ENCODE measurements at regions of chr1 and their contacts with region 1.

Region 1: GRCh38 chr1:207205614-207206061 is 101.6 kb downstream of the C4BPA start:
- DNase-seq: no peak
- H3K4me3 Mint-ChIP-seq: no peak overlapping the region
- H3K27ac Mint-ChIP-seq: peak overlapping the region; percentile 78
- H3K4me1 Mint-ChIP-seq: peaks cover 11% of the 10 kb centered on the region
- H3K27me3 Mint-ChIP-seq: no peaks in the 10 kb centered on the region
- CTCF ChIP-seq: no peak

Region 2: DNA sequence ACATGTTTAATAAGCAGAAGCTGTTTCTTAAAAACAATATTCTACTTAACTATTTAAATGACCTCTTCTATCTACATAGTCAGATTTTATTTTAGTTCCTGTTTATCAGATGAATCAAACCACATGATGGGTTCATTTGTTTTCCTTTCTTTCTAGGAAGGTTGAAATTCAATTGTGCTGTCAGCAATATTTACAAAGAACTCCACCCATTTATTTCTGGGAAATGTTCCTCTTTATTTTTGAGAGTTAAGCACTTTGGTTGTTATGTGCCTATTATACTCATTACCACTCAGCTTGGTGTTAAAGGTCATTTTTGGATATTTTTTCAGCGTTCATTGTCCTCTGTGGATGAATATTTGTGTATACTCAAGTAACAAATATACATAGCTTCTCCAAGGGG is 16.7 kb before region 1 on chr1:
- CTCF ChIA-PET with region 1: interaction called, 3 read pairs
- POLR2A ChIA-PET with region 1: interaction called, 12 read pairs
- intact Hi-C with region 1: no loop called
- DNase-seq: no peak
- H3K4me3 Mint-ChIP-seq: no peak overlapping the region
- H3K27ac Mint-ChIP-seq: no peak overlapping the region
- H3K4me1 Mint-ChIP-seq: no peaks in the 10 kb centered on the region
- H3K27me3 Mint-ChIP-seq: no peaks in the 10 kb centered on the region
- CTCF ChIP-seq: no peak

Region 3: GRCh38 chr1:207218512-207219362 is 13.1 kb after region 1 on chr1:
- CTCF ChIA-PET with region 1: interaction called, 3 read pairs
- POLR2A ChIA-PET with region 1: interaction called, 16 read pairs
- intact Hi-C with region 1: no loop called
- DNase-seq: peak; percentile 84
- H3K4me3 Mint-ChIP-seq: no peak overlapping the region
- H3K27ac Mint-ChIP-seq: peak overlapping the region; percentile 6
- H3K4me1 Mint-ChIP-seq: peaks cover 33% of the 10 kb centered on the region
- H3K27me3 Mint-ChIP-seq: no peaks in the 10 kb centered on the region
- CTCF ChIP-seq: no peak